ENCODE measurements at regions of chr12 and their contacts with region 1.

Region 1: DNA sequence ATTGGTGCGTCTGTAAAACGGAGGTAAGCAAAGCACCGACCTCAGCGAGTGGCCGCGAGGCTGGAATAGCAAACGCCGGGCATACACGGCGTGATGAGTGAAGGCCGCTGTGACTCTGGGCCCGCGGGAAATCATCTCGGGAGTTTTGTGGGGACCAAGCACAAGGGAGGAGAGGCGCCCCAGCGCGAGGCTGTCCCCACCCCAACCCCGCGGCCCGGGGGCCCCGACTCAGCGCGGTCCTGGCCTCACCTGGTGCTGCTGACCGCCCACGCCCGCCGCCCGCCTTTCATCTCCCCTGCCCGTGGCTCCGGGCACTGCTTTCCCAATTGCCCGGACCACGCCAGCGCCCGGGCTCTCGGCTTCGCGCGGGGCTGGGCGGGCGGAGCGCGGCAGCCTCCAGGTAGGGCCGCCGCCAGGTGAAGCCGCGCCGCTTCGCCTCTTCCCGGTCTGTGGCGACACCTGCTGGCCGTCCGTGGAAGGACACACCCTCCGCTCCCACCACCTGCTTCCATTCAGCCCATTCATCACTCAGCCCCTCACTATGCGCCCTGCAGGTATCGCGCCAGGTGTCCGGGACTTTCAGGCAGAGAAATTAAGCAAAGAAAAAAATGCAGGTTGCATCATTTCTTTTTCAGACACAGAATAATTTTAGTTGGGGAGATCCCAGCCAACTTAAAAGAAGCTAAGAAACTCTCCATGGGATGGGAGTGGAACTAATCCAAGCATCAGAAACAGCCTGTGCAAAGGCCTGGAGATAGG is 360.4 kb downstream of the MED13L start:
- DNase-seq: peak; percentile 50
- H3K4me3 ChIP-seq: peak overlapping the region; percentile 40
- H3K27ac ChIP-seq: no peak overlapping the region
- H3K4me1 ChIP-seq: peaks cover 4% of the 10 kb centered on the region
- H3K27me3 ChIP-seq: peaks cover 72% of the 10 kb centered on the region
- CTCF ChIP-seq: peak; percentile 96

Region 2: GRCh38 chr12:114662512-114663177 is 1254.4 kb before region 1 on chr12:
- intact Hi-C with region 1: loop called (anchors 2 kb)
- DNase-seq: peak; percentile 70
- H3K4me3 ChIP-seq: no peak overlapping the region
- H3K27ac ChIP-seq: no peak overlapping the region
- H3K4me1 ChIP-seq: peaks cover 25% of the 10 kb centered on the region
- H3K27me3 ChIP-seq: peaks cover 91% of the 10 kb centered on the region
- CTCF ChIP-seq: peak; percentile 98

Region 3: GRCh38 chr12:115866909-115867525 is 50.1 kb before region 1 on chr12:
- intact Hi-C with region 1: no loop called
- DNase-seq: no peak
- H3K4me3 ChIP-seq: no peak overlapping the region
- H3K27ac ChIP-seq: no peak overlapping the region
- H3K4me1 ChIP-seq: peaks cover 28% of the 10 kb centered on the region
- H3K27me3 ChIP-seq: no peaks in the 10 kb centered on the region
- CTCF ChIP-seq: no peak

Measured in left ventricle myocardium inferior (tissue), 1 donor.